CD8-positive, alpha-beta memory T cell (primary cell): ENCODE measurements at regions of chr5 and their contacts with region 1.

Region 1: GRCh38 chr5:54062958-54063357 is 247.4 kb downstream of the ARL15 start:
- DNase-seq: no peak
- H3K4me3 ChIP-seq: no peak overlapping the region
- H3K4me3 Mint-ChIP-seq: no peak overlapping the region
- H3K27ac ChIP-seq: no peak overlapping the region
- H3K27ac Mint-ChIP-seq: no peak overlapping the region
- H3K4me1 ChIP-seq: no peaks in the 10 kb centered on the region
- H3K4me1 Mint-ChIP-seq: no peaks in the 10 kb centered on the region
- H3K27me3 ChIP-seq: no peaks in the 10 kb centered on the region
- H3K27me3 Mint-ChIP-seq: no peaks in the 10 kb centered on the region

Region 2: DNA sequence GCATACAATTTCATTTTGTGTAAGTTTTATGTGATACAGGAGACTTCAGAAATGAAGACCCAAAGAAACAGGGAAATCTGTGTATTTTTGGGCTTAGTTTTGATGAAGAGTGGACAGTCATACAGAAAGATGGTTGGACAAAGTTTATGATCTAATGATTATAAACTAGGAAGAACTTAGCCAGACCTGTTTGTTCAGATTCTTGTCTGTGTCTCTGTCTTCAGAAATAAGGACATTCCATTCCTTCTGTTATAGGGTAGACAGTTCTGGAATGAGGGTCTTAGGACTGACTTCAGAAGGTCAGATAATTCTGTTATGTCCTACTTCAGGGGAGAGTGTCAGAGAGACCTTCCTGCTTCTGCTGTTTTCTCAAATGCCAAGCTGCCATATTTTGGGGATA is 412.6 kb before region 1 on chr5:
- CTCF ChIA-PET with region 1: no interaction called
- POLR2A ChIA-PET with region 1: no interaction called
- DNase-seq: no peak
- H3K4me3 ChIP-seq: no peak overlapping the region
- H3K4me3 Mint-ChIP-seq: no peak overlapping the region
- H3K27ac ChIP-seq: no peak overlapping the region
- H3K27ac Mint-ChIP-seq: peak overlapping the region in 1 of 8 donors; percentile 38
- H3K4me1 ChIP-seq: no peaks in the 10 kb centered on the region
- H3K4me1 Mint-ChIP-seq: peaks cover 0 to 15% (median 3%) of the 10 kb centered on the region in 3 donors
- H3K27me3 ChIP-seq: no peaks in the 10 kb centered on the region
- H3K27me3 Mint-ChIP-seq: no peaks in the 10 kb centered on the region

Region 3: DNA sequence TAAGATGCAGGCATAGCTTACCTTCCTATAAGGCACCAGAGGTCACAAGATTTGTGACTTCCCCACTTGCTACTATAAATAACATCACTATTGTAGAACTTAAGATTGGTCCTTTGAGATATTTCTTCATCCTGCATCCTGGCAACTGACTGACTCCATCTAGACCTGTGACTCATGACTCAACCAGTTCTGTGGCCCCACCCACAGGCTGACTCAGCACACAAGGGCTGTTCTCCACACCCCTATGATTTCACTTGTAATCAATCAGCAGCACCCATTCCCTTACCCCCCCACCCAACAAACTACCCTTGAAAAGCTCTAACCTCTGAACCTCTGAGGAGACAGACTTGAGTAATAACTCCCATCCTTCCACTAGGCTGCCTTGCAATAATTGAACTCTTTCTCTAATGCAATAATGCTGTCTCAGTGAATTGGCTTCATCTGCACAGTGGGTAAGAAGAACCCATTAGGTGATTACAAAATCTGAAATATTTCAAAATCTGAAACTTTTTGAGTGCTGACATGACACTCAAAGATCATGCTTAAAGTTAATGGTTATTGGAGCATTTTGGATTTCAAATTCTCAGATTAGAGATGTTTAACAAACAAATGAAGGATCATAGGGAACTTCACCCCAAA is 49.3 kb before region 1 on chr5:
- CTCF ChIA-PET with region 1: no interaction called
- POLR2A ChIA-PET with region 1: interaction called, 10 read pairs
- DNase-seq: no peak
- H3K4me3 ChIP-seq: no peak overlapping the region
- H3K4me3 Mint-ChIP-seq: no peak overlapping the region
- H3K27ac ChIP-seq: no peak overlapping the region
- H3K27ac Mint-ChIP-seq: no peak overlapping the region
- H3K4me1 ChIP-seq: no peaks in the 10 kb centered on the region
- H3K4me1 Mint-ChIP-seq: no peaks in the 10 kb centered on the region
- H3K27me3 ChIP-seq: no peaks in the 10 kb centered on the region
- H3K27me3 Mint-ChIP-seq: no peaks in the 10 kb centered on the region